ENCODE measurements at regions of chr11 and their contacts with region 1.

Region 1: DNA sequence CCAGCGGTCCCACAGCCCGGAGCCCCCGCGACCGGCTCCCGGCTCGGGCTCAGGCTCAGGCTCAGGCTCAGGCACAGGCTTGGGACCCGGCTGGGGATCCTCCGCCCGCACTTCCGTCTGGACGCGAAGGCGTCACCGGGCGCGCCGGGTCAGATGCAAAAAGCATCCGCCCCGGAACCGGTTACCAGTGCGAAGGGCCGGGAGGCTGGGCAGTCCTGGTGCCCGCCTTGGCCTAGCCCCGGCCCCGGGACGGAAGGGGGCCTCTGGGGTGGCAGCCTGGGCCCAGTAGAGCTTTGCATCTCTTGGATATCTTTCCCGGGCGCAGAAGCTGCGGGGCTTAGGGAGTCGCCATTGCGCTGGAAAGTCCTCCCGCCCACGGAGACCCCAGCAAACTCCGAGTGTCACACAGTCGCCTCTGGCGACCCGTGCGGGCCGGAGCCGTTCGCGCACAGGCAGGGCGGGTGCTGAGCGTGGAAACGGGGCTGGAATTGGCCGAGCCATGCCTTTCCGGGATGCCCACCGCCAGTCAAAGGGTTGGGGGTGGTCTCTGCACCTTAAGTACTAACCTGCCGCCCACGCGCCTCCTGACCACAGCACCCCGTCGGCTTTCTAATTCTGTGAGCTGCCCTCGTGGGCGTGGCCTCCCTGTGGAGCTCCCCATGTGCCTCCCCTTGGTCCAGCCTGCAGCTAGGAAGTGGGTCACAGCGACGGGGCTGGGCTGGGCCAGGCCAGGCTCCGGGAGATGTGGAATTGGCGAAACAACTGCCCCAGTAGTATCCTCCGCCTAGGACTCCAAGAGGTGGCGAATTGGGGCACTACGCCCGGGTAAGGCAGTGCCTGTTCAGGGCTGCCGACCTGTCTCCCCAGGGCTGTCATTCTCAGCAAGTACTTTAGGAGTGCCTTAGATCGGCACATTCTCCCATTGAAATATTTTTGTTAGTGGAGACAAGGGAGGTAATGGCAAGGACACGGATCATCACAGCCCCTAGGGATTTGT is at the start of gene TMEM9B:
- DNase-seq: peak; percentile 92 to 96 (median 95)
- ATAC-seq: peak; percentile 90 to 97 (median 96)
- H3K4me3 ChIP-seq: peak within 1 kb of the TSS; percentile 61 to 97 (median 80)
- H3K27ac ChIP-seq: peak within 1 kb of the TSS; percentile 88 to 99 (median 95)
- H3K4me1 ChIP-seq: peaks cover 0 to 37% (median 25%) of the 10 kb centered on the region in 12 donors
- H3K27me3 ChIP-seq: no peaks in the 10 kb centered on the region
- CTCF ChIP-seq: no peak
- POLR2A ChIP-seq: peak in 1 of 2 donors; percentile 86
- total RNA-seq, gene TMEM9B: 39.9 to 58.3 (median 46.5) TPM

Region 2: GRCh38 chr11:8338138-8338537 is 626.5 kb before region 1 on chr11:
- intact Hi-C with region 1: loop called in 1 of 10 experiments (anchors 5 kb)
- DNase-seq: peak in 4 of 5 donors; percentile 34 to 70 (median 50)
- ATAC-seq: peak in 3 of 4 donors; percentile 50 to 77 (median 61)
- H3K4me3 ChIP-seq: no peak overlapping the region
- H3K27ac ChIP-seq: no peak overlapping the region
- H3K4me1 ChIP-seq: no peaks in the 10 kb centered on the region
- H3K27me3 ChIP-seq: no peaks in the 10 kb centered on the region
- CTCF ChIP-seq: peak; percentile 46 to 73 (median 61)
- POLR2A ChIP-seq: no peak

Region 3: DNA sequence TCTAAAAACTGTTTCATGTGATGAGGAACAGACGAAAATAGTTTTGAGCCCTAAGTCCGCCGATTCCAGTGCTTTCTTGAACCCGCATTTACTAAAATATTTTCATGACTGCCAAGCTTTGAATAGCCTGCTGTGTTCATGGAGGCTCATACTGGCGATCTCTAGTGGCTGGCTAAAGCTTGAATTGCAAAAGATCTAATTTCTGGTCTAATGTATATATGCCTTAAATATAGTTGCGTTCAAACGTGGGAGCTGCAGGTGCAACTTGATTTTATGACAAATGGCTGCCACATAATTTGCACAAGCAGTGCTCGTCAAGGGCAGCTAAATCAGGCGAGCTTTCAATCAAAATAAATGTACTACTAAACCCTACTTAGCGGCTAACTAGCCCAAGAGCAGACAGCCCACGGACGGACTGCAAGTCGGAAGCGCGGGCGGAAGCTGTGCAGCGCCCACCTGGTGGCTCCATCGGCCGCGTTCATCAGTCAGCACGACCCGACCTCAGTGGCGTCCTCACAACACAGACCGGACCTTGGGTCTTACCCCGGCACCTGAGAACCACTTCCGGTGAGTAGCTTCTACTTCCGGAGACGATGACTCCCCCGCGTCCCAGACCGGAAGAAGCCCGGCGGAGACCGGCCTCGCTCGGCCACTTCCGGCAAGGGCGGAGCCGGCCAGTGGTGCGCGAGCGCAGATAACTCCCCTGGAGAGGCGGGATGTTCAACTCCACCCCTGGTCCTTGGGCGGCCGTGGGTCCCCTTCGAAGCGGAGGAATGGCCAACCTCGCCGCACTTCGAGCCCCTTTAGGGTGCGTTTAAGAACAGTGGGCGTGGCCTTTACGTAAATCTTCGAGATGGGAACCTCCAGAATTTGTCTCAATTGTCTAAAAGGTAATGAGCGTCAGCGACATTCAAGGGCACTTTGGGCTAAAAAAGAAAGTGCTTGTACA is 275.9 kb before region 1 on chr11:
- intact Hi-C with region 1: loop called in 9 of 10 experiments (anchors 5 to 10 kb)
- DNase-seq: peak; percentile 94 to 97 (median 96)
- ATAC-seq: peak; percentile 97 to 99 (median 98)
- H3K4me3 ChIP-seq: peak overlapping the region; percentile 38 to 75 (median 66)
- H3K27ac ChIP-seq: peak overlapping the region; percentile 45 to 96 (median 88)
- H3K4me1 ChIP-seq: peaks cover 0 to 44% (median 22%) of the 10 kb centered on the region in 12 donors
- H3K27me3 ChIP-seq: no peaks in the 10 kb centered on the region
- CTCF ChIP-seq: peak in 5 of 12 donors; percentile 17 to 53 (median 49)
- POLR2A ChIP-seq: peak in 1 of 2 donors; percentile 71

Region 4: DNA sequence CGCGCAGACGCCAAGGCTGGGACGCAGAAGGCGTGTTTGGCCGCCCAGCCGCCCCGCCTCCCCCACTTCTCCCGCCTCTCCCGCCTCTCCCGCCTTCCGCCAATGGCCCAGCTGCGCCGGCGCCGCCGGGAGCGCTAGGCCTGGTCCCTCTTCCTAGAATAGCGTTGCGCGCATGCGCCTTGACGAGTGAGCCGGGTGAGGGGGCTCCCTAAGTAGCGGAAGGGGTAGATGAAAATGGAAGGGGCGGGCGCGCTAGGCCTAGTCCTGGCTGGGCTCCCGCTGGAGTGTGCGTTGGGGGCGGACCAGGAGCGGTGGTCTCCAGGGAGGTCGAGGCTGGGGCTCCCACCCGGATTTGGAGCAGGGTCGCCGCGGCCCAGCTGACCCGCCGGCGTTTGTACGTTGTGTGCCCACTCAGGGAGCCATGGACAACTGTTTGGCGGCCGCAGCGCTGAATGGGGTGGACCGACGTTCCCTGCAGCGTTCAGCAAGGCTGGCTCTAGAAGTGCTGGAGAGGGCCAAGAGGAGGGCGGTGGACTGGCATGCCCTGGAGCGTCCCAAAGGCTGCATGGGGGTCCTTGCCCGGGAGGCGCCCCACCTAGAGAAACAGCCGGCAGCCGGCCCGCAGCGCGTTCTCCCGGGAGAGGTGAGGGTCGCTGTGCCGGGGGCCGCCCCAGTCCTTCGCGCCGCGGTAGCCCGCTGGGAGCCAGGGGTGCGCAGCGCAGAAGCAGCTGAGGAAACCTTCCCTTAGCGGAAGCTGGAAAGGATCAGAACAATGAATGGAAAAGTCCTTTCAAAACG is 53.4 kb before region 1 on chr11 and contains the start of gene AKIP1:
- intact Hi-C with region 1: loop called in 9 of 10 experiments (anchors 2 to 5 kb)
- DNase-seq: peak; percentile 97 to 98 (median 98)
- ATAC-seq: peak; percentile 94 to 97 (median 96)
- H3K4me3 ChIP-seq: peak within 1 kb of the TSS; percentile 40 to 96 (median 85)
- H3K27ac ChIP-seq: peak within 1 kb of the TSS; percentile 80 to 98 (median 94)
- H3K4me1 ChIP-seq: peaks cover 0 to 52% (median 25%) of the 10 kb centered on the region in 12 donors
- H3K27me3 ChIP-seq: no peaks in the 10 kb centered on the region
- CTCF ChIP-seq: no peak
- POLR2A ChIP-seq: peak in 1 of 2 donors; percentile 74
- total RNA-seq, gene AKIP1: 21.6 to 39.9 (median 27.4) TPM

Region 5: DNA sequence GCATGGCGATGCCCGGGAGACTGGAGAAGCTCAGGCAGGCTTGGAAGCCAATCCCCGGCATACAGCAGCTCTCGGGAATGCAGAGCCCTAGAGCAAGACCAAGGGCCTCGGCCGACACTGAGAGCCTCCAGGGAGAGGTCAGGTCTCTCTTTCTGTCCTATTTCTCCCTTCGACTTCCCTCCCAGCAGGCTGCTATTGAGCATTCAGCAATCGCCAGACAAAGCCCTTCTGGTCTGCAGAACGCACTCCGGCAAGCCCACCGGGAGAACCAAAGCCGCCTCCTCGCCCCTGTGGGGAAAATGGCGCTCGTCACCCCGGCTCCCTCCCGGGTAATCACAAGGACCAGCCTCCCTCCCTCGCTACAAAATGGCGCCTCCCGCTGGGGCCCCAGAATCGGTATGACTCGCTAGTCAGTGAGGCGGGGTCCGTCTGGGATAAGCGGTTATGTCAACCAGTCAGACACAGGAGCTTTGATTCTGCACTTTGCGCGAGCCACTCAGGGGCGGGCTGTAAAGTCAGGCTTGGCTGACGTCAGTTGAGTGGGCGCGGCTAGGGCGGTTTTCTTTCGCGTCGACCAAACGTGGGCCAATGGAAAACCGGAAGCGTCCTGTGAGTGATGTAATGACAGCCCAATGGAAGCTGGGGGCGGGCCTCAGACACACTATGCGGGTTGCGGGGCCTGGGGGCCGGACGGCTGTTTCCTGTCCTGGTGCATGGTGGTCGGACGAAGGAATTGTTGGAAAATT is 495.9 kb after region 1 on chr11 and contains the start of gene ZNF143:
- intact Hi-C with region 1: loop called in 1 of 10 experiments (anchors 5 kb)
- DNase-seq: peak; percentile 100
- ATAC-seq: peak; percentile 96 to 99 (median 98)
- H3K4me3 ChIP-seq: peak within 1 kb of the TSS; percentile 80 to 99 (median 91)
- H3K27ac ChIP-seq: peak within 1 kb of the TSS; percentile 98 to 100 (median 100)
- H3K4me1 ChIP-seq: peaks cover 0 to 27% (median 20%) of the 10 kb centered on the region in 12 donors
- H3K27me3 ChIP-seq: no peaks in the 10 kb centered on the region
- CTCF ChIP-seq: peak in 1 of 12 donors; percentile 3
- POLR2A ChIP-seq: peak; percentile 76 to 91
- total RNA-seq, gene ZNF143: 16.8 to 32.3 (median 22.0) TPM

Region 6: DNA sequence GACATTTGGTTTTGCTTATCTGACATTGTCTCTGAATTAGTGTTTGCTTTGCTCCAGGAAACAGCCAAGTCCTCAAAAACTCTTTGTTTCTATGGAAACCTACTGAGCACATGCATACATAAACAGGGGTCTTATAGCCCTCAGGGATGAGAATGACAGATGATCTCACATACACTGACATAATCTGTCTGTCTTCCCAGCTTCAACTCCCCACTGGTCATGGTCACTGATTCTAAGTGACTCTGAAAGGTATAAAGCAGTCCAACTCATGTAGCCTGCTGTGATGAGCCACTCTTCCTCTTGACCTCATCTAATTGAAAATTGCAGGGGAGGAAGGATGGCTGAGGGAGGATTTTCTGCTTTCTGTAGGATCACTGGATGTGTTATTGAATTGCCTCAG is 508.8 kb after region 1 on chr11:
- intact Hi-C with region 1: no loop called
- DNase-seq: no peak
- ATAC-seq: no peak
- H3K4me3 ChIP-seq: no peak overlapping the region
- H3K27ac ChIP-seq: no peak overlapping the region
- H3K4me1 ChIP-seq: no peaks in the 10 kb centered on the region
- H3K27me3 ChIP-seq: no peaks in the 10 kb centered on the region
- CTCF ChIP-seq: no peak
- POLR2A ChIP-seq: no peak